ENCODE measurements at regions of chr7 and their contacts with region 1.

Region 1: DNA sequence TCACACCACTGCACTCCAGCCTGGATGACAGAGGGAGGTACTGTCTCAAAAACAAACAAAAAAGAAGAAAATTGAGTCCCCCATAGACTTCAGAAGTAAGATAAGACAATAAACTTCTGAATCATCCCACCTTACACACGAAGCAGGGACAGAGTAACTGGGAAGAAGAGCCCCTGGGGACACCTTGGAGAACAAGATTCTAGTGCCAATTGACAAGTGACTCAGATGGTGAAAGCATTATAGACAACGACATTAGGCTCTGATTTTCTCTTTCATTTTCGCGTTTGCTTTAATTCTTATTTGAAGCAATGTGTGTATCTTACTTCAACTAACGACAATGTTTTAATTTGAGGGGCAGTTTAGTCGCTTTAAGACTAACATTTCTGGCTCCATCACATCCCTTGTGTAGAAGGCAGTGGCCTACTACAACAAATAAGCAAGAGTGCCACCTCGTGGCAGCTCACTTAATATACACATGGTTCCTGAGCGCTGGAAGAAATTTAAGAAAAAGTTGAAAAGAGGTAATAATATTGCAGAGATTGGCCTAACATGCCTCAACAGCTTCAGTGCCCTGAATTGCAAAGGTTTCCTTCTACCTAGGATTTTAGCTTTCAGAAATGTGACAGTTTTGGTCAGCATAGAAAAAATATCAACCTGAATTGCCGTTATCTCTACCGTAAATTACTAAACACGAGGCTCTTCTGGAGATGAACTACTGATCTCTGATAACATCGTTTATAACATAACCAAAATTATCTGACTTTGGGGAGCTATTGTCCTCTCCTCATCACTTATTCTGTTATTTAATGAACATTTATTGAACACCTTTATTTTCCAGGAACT is 36.7 kb downstream of the ASNS start:
- DNase-seq: peak; percentile 25
- H3K4me3 Mint-ChIP-seq: no peak overlapping the region
- H3K27ac Mint-ChIP-seq: no peak overlapping the region
- H3K4me1 Mint-ChIP-seq: no peaks in the 10 kb centered on the region
- H3K27me3 Mint-ChIP-seq: peaks cover 26% of the 10 kb centered on the region

Region 2: GRCh38 chr7:97104719-97105238 is 730.7 kb before region 1 on chr7:
- intact Hi-C with region 1: loop called (anchors 1 kb)
- DNase-seq: peak; percentile 49
- H3K4me3 Mint-ChIP-seq: no peak overlapping the region
- H3K27ac Mint-ChIP-seq: no peak overlapping the region
- H3K4me1 Mint-ChIP-seq: no peaks in the 10 kb centered on the region
- H3K27me3 Mint-ChIP-seq: peaks cover 20% of the 10 kb centered on the region

Region 3: GRCh38 chr7:97499204-97499603 is 336.3 kb before region 1 on chr7:
- intact Hi-C with region 1: loop called (anchors 1 kb)
- DNase-seq: no peak
- H3K4me3 Mint-ChIP-seq: no peak overlapping the region
- H3K27ac Mint-ChIP-seq: no peak overlapping the region
- H3K4me1 Mint-ChIP-seq: no peaks in the 10 kb centered on the region
- H3K27me3 Mint-ChIP-seq: no peaks in the 10 kb centered on the region

Region 4: DNA sequence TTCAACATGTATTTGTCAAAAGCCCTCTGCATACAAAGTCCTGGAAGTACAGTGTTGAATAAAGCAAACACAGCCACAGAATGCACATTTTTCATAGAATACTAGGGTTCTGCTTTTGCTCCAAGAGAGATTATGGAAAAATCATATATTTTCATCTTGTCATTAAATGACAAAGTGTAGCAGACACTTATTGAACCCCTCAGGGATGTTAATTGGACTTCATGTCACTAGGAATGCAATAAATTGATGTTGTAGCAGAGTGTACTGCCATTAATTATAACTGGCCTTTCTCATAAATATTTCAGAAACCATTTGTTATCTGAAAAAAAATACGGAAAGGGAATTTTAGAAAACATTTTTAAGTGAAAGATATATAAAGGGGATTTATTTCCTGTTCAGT is 168.2 kb before region 1 on chr7:
- intact Hi-C with region 1: no loop called
- DNase-seq: no peak
- H3K4me3 Mint-ChIP-seq: no peak overlapping the region
- H3K27ac Mint-ChIP-seq: no peak overlapping the region
- H3K4me1 Mint-ChIP-seq: no peaks in the 10 kb centered on the region
- H3K27me3 Mint-ChIP-seq: no peaks in the 10 kb centered on the region